Calu3 (cell line): ENCODE measurements at regions of chr5 and their contacts with region 1.

Region 1: DNA sequence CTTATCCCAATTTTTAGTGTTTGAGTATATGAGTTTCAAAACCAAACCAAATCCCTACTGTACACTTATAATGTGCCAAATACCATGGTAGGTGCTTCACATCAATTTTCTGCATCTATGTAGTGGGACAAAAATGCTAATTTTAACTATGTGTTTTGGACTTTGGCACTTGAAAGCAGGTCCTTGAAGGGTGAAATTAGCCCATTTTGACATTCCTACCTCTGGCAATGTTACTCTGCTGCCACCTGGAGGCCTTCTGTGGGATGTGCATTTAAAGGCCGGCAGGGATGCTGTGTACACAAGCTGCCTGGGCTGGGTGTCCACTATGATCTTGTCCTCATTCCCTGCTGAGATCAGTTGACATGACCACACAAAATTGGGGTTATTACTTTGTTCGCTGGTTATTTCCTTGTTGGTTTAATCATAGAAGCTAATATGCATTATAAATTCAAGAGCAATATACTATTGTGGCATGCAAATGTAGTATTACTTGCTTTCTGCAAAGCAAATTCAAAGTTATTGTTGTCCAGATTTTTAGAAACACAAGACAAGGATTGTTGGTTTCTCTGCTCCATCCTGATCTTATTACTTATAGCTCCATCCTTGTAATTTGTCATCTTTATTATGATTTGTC is 166.8 kb downstream of the ARHGEF28 start:
- DNase-seq: peak; percentile 84
- H3K4me3 Mint-ChIP-seq: no peak overlapping the region
- H3K27ac Mint-ChIP-seq: peak overlapping the region; percentile 47
- H3K4me1 Mint-ChIP-seq: peaks cover 62% of the 10 kb centered on the region
- H3K27me3 Mint-ChIP-seq: no peaks in the 10 kb centered on the region
- CTCF ChIP-seq: peak; percentile 98

Region 2: DNA sequence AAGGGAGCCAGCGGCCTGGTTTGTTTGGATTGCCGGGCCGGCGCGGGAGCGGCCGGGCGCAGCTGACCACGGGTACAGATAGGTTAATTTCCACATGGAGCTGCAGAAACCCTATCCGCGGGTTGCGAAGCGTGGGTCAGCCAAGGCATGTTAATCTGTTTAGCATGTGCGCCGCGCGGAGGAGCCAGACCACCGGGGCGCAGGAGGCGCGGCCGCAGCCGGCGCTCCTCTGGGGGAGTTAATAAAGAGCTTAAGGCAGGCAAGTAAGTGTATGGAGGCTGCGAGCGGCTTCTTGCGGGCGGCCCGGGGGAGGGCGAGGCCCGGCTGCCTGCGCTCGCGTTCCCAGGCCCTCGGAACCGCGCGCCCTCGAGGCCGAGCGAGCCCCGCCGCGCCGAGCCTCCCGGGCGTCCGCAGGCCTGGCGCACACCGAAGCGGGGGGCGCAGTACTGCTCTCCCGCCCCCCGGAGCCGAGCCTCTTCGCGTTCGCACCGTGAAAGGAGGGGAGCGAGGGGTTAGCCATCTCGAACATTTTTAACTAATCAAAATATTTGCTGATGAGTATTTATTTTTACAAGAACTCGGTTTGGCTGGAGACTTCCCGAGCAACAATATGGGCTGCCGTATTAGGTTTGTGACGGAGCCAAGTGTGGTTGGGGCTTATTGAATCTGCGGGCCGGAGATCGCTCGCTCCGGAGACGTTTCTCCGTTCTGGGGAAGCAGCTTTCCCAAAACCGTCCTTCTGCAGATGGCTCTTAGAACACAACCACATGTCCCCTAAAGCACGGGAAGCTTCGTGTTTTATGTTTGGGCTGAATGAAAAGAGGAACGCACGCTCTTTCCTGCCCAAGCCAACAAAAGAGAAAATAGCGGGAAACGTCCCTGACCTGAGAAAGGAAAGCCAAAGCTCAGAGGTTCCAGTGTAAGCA is 373.1 kb before region 1 on chr5:
- CTCF ChIA-PET with region 1: no interaction called
- intact Hi-C with region 1: loop called (anchors 5 kb)
- DNase-seq: no peak
- H3K4me3 Mint-ChIP-seq: peak overlapping the region; percentile 74
- H3K27ac Mint-ChIP-seq: no peak overlapping the region
- H3K4me1 Mint-ChIP-seq: peaks cover 6% of the 10 kb centered on the region
- H3K27me3 Mint-ChIP-seq: peaks cover 68% of the 10 kb centered on the region
- CTCF ChIP-seq: no peak

Region 3: GRCh38 chr5:73515223-73515622 is 277.6 kb before region 1 on chr5:
- CTCF ChIA-PET with region 1: no interaction called
- intact Hi-C with region 1: no loop called
- DNase-seq: peak; percentile 73
- H3K4me3 Mint-ChIP-seq: no peak overlapping the region
- H3K27ac Mint-ChIP-seq: peak overlapping the region; percentile 75
- H3K4me1 Mint-ChIP-seq: peaks cover 40% of the 10 kb centered on the region
- H3K27me3 Mint-ChIP-seq: no peaks in the 10 kb centered on the region
- CTCF ChIP-seq: no peak

Region 4: GRCh38 chr5:73733219-73733618 is 59.6 kb before region 1 on chr5:
- CTCF ChIA-PET with region 1: no interaction called
- intact Hi-C with region 1: no loop called
- DNase-seq: no peak
- H3K4me3 Mint-ChIP-seq: no peak overlapping the region
- H3K27ac Mint-ChIP-seq: no peak overlapping the region
- H3K4me1 Mint-ChIP-seq: peaks cover 8% of the 10 kb centered on the region
- H3K27me3 Mint-ChIP-seq: no peaks in the 10 kb centered on the region
- CTCF ChIP-seq: no peak

Region 5: GRCh38 chr5:74281166-74281565 is 488.4 kb after region 1 on chr5:
- CTCF ChIA-PET with region 1: no interaction called
- intact Hi-C with region 1: no loop called
- DNase-seq: no peak
- H3K4me3 Mint-ChIP-seq: no peak overlapping the region
- H3K27ac Mint-ChIP-seq: no peak overlapping the region
- H3K4me1 Mint-ChIP-seq: no peaks in the 10 kb centered on the region
- H3K27me3 Mint-ChIP-seq: no peaks in the 10 kb centered on the region
- CTCF ChIP-seq: no peak